Caco-2 (cell line): ENCODE measurements at regions of chr6 and their contacts with region 1.

Region 1: GRCh38 chr6:119170447-119171087 is 92.1 kb upstream of the FAM184A start:
- DNase-seq: peak in 1 of 2 experiments; percentile 71
- H3K4me3 ChIP-seq: no peak overlapping the region
- H3K4me3 Mint-ChIP-seq: peak overlapping the region; percentile 50
- H3K27ac Mint-ChIP-seq: peak overlapping the region; percentile 61
- H3K4me1 ChIP-seq: peaks cover 47% of the 10 kb centered on the region
- H3K4me1 Mint-ChIP-seq: peaks cover 37% of the 10 kb centered on the region
- H3K27me3 ChIP-seq: no peaks in the 10 kb centered on the region
- H3K27me3 Mint-ChIP-seq: no peaks in the 10 kb centered on the region
- CTCF ChIP-seq: no peak

Region 2: GRCh38 chr6:119129148-119129967 is 41.2 kb before region 1 on chr6:
- CTCF ChIA-PET with region 1: interaction called, 3 read pairs
- POLR2A ChIA-PET with region 1: no interaction called
- intact Hi-C with region 1: loop called (anchors 1 kb)
- DNase-seq: peak in 1 of 2 experiments; percentile 66
- H3K4me3 ChIP-seq: no peak overlapping the region
- H3K4me3 Mint-ChIP-seq: peak overlapping the region; percentile 43
- H3K27ac Mint-ChIP-seq: peak overlapping the region; percentile 33
- H3K4me1 ChIP-seq: peaks cover 35% of the 10 kb centered on the region
- H3K4me1 Mint-ChIP-seq: peaks cover 34% of the 10 kb centered on the region
- H3K27me3 ChIP-seq: no peaks in the 10 kb centered on the region
- H3K27me3 Mint-ChIP-seq: no peaks in the 10 kb centered on the region
- CTCF ChIP-seq: peak; percentile 51 to 54

Region 3: DNA sequence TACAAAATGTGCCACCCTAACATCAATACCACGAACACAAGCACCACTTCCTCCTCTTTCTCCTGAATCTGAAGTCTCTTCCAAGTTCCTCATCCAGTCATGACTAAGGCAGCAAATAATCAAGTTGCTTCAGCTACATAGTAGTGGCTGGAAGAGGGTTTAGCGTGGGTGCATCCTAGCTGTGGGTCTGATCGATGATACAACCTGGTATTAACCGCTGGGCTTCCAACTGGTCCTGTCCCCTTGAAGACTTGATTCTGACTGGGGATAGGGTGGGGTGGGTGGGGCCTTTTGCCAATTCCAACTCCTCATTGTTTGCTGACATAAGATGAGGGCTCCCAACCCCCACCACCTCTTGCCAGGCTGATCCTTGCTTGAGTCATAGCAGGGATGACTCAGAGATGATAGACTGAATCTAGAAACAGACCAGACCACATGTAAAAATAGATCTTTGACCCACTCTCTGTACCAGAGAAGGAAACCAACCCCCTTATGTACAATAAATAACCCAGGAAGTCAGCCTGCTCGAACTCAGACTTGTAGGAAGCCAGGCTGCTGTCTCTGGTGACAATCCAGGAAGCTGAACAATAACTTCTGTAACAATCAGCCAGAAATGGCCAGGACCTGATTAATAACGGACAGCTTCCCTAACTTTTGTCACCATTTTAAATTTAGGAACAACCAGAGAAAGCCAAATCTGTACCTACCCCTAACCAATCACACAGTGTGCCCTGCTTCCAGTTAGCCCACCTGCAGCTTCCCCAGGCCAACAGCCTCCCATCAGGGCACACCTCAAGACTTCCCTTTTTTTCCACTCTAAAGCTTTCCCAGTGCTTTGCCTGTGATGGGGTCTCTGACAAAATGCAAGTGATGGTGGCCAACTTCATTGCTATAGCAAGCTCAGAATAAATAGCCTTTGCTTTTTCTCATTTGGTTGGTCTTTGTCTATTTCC is 23.2 kb before region 1 on chr6:
- CTCF ChIA-PET with region 1: interaction called, 8 read pairs
- POLR2A ChIA-PET with region 1: no interaction called
- intact Hi-C with region 1: loop called (anchors 2 kb)
- DNase-seq: peak; percentile 21 to 53
- H3K4me3 ChIP-seq: no peak overlapping the region
- H3K4me3 Mint-ChIP-seq: no peak overlapping the region
- H3K27ac Mint-ChIP-seq: peak overlapping the region; percentile 66
- H3K4me1 ChIP-seq: peaks cover 18% of the 10 kb centered on the region
- H3K4me1 Mint-ChIP-seq: peaks cover 22% of the 10 kb centered on the region
- H3K27me3 ChIP-seq: no peaks in the 10 kb centered on the region
- H3K27me3 Mint-ChIP-seq: no peaks in the 10 kb centered on the region
- CTCF ChIP-seq: no peak

Region 4: GRCh38 chr6:119261945-119262286 is 91.3 kb after region 1 on chr6:
- CTCF ChIA-PET with region 1: no interaction called
- POLR2A ChIA-PET with region 1: no interaction called
- intact Hi-C with region 1: loop called (anchors 1 kb)
- DNase-seq: no peak
- H3K4me3 ChIP-seq: no peak overlapping the region
- H3K4me3 Mint-ChIP-seq: no peak overlapping the region
- H3K27ac Mint-ChIP-seq: no peak overlapping the region
- H3K4me1 ChIP-seq: peaks cover 17% of the 10 kb centered on the region
- H3K4me1 Mint-ChIP-seq: peaks cover 18% of the 10 kb centered on the region
- H3K27me3 ChIP-seq: no peaks in the 10 kb centered on the region
- H3K27me3 Mint-ChIP-seq: no peaks in the 10 kb centered on the region
- CTCF ChIP-seq: no peak

Region 5: DNA sequence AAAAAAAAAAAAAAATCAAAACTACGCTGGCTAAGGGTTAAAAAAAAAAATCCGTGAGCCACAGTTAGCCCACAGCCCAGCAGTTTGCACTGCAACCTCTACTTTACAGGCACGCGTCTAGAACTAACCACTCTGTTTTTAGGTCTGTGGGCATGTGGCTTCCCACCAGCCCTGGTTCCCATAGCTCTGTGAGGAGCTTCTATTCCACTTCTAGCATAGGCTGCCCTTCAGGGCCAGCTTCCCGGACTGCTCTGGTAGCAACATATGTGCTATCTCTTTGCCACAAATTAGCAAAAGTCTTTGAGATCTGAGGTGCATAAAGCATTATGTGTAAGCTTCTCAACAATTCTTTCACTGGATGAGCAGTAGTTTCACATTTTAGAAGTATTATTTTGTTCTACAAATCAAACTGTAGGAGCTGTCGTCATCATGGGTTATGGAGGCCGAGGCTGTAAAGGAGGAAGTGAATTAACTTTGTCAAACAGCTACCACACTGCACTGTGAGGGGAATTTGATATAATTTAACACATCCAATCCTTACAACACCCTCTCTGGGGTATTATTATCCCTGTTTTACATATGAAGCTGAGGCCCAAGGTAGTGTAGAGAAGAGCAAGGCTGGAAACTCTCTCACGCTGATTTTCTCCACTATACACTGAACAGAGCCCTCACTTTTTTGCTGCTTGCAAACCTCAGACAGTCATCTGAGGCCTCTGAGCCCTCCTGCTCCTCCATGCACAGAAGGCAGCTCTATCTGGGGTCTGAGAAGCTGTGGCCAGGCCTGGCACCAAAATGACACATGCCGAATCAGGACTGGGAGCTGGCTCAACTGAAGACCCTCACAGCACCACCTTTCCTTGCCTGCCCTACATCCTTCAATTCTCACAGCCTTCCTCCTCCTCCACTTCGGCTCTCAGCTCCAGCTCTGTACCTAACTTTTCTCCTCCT is 143.6 kb after region 1 on chr6:
- CTCF ChIA-PET with region 1: no interaction called
- POLR2A ChIA-PET with region 1: no interaction called
- intact Hi-C with region 1: loop called (anchors 2 kb)
- DNase-seq: no peak
- H3K4me3 ChIP-seq: no peak overlapping the region
- H3K4me3 Mint-ChIP-seq: no peak overlapping the region
- H3K27ac Mint-ChIP-seq: no peak overlapping the region
- H3K4me1 ChIP-seq: peaks cover 20% of the 10 kb centered on the region
- H3K4me1 Mint-ChIP-seq: peaks cover 30% of the 10 kb centered on the region
- H3K27me3 ChIP-seq: no peaks in the 10 kb centered on the region
- H3K27me3 Mint-ChIP-seq: no peaks in the 10 kb centered on the region
- CTCF ChIP-seq: no peak

Region 6: DNA sequence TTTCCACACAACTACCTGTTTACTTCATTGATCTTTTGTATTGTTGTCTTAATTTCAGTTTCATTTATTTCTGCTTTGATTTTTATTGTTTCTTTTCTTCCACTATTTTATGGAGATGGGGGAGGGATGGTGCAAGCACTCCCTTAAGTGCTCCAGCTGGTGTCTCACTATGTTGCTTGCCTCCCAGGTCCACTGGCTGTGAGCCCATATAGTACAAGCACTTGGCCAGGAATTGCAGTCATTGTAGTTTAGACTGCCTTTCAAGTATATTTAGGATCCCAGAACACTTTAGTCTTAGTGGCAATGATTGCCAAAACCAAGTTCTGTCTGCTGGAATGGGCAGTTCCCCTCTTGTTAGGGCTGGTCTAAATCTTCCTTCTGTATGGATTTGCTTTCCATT is 213.9 kb after region 1 on chr6:
- CTCF ChIA-PET with region 1: no interaction called
- POLR2A ChIA-PET with region 1: no interaction called
- intact Hi-C with region 1: loop called (anchors 1 kb)
- DNase-seq: no peak
- H3K4me3 ChIP-seq: no peak overlapping the region
- H3K4me3 Mint-ChIP-seq: no peak overlapping the region
- H3K27ac Mint-ChIP-seq: no peak overlapping the region
- H3K4me1 ChIP-seq: peaks cover 14% of the 10 kb centered on the region
- H3K4me1 Mint-ChIP-seq: peaks cover 10% of the 10 kb centered on the region
- H3K27me3 ChIP-seq: no peaks in the 10 kb centered on the region
- H3K27me3 Mint-ChIP-seq: no peaks in the 10 kb centered on the region
- CTCF ChIP-seq: no peak